ENCODE measurements at regions of chr20 and their contacts with region 1.

Region 1: DNA sequence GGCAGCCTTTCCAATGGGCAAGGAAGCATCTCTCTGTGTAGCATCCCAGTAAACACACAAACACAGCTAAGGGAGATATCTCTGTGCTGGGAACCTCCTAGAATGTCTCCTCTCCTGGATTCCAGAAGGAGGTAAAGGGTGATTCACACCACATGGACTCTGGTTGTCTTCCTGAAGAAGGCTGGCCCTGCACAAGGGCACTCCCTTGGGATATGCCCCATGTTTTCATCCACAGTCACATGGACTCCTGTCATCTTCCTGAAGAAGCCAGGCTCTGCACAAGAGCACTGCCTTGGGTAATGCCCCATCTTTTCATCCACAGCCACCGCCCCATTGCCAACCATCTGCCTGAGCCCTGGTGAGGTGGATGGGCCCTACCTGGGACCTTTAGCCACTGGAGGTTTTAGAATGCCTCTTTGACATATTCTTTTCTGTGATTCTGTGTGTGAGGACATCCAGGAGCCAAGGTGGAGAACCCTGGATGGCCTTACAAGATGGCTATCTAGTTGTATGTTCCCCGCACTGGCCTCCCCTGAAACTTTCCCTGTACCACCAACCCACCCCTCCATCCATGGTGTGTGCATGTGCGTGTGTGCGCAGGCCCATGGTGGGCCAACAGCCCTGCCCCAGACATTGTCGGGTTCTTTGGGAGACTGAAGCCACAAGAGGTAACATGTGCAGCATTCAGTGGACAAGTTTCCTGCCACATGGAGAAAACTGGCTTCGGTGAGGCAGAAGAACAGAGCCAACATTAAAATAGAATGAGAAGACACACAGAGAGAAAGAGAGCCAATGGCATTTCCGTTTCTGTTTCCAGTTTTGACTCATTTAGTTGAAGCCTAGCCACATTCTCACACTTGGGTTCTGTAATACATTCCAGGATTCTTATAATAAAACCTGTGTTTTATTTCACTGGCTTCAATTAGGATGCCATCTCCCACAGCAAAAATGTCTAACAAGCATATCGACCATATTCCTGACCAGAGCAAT is 110.2 kb upstream of the CST7 start:
- DNase-seq: peak; percentile 38
- H3K4me3 ChIP-seq: no peak overlapping the region
- CTCF ChIP-seq: no peak

Region 2: DNA sequence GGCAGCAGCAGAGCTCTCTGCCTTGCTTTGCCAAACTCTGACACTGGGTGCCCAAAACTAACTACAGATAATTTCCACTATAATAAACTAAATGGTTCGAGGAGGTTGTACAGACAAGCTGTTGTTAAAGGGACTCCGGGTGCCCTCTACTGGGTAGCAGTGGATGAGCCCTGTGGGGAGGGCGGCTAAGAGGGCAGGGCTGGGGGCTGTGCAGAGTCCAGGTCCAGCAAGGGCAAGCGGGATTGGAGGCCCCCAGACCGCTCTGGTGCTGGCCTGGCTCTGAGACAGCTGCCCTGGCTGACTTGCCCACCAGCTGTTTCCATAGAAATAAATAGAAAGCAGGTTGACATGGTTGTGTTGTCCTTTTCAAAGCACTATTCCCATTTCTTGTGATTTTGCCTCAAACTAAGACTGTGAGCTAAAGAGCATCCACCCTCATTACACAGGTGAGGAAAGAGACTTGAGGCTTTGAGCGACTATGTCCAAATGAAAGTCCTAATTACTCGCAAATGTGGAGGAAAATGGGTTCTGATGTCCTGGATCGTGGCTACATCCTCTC is 57.3 kb before region 1 on chr20:
- in situ Hi-C with region 1: loop called (anchors 5 kb)
- DNase-seq: no peak
- H3K4me3 ChIP-seq: no peak overlapping the region
- CTCF ChIP-seq: peak; percentile 80

Region 3: DNA sequence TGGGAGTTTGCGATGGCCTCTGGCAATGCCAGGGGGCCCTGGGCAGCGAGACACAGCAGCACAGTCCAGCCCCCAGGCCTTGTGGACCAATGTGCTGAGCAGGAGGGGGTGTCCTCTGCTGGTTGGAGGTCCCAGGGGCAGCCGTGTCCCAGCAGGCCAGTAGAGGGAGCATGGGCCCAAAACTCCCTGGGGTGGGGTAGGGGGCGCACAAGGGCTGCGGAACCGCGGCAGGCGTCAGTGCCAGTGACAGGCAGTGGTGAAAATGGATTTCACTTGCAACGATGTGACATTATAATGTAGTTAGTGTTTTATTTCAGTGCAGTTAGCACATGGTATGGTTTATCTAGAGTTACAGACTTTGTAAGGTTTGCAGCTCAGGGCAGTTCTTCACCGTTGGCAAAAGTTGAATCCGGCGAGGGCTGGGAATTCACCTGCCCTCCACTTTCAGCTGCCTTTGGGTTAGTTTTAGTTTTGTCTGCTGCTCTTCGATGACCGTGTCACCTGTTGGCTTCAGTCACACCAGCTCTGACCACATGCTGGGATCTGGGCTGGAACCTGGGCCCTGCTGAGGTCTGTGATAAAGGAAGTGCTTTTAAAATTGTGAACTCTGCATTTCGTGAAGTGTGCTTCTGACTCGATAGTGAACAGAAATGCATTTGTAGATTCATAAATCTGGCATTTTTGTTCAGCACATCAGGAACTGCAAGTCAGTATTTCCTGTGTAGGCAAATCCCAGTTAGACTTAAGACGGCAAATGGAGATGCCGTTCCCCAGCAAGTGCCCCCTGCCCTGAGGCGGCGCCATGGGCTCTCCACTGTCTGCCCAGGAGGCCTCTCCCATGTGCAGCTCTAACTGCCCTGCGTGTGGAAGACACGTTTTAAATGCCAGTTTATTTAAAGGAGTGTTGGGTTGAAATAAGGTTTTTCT is 455.9 kb after region 1 on chr20:
- in situ Hi-C with region 1: no loop called
- DNase-seq: no peak
- H3K4me3 ChIP-seq: no peak overlapping the region
- CTCF ChIP-seq: peak; percentile 96

Measured in astrocyte of the cerebellum (primary cell).